ENCODE measurements at regions of chr2 and their contacts with region 1.

Region 1: DNA sequence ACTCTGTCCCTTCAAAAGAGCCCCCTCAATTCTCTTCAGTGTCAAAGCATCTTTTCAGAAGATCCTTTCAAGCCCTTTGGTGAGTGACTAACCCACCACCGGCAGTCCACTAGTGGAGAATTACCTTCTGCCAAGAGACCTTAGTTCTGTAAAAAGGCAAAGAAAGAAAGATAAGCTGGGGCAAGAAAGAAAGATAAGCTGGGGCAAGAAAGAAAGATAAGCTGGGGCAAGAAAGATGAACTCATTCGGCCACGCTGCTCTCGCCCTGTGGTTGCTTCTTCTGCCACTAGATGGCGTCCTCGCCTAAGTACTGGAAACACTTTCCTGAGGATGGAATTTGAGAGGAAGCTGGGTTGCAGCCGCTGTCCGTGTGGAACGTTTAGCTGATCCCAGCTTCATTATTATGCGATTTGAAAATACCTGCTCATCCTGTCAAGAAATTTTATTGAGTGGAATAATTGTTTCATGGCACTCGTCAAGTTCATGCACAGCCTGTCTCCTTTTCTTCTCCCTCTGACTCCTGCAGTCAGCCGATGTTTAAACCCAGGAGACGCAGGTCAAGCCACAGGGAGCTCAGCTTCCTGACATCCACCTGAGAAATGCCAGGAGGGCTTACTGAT is 17.3 kb upstream of the ANXA4 start:
- DNase-seq: peak; percentile 86 to 92 (median 89)
- H3K4me3 ChIP-seq: peak overlapping the region; percentile 54 to 58 (median 54)
- H3K27ac ChIP-seq: no peak overlapping the region
- H3K4me1 ChIP-seq: no peaks in the 10 kb centered on the region
- H3K27me3 ChIP-seq: no peaks in the 10 kb centered on the region
- CTCF ChIP-seq: peak; percentile 92

Region 2: GRCh38 chr2:69816923-69817542 is 92.4 kb after region 1 on chr2:
- intact Hi-C with region 1: loop called (anchors 10 kb)
- DNase-seq: peak in 4 of 5 donors; percentile 81 to 93 (median 86)
- H3K4me3 ChIP-seq: no peak overlapping the region
- H3K27ac ChIP-seq: no peak overlapping the region
- H3K4me1 ChIP-seq: no peaks in the 10 kb centered on the region
- H3K27me3 ChIP-seq: no peaks in the 10 kb centered on the region
- CTCF ChIP-seq: peak; percentile 96

Region 3: GRCh38 chr2:69914170-69914960 is 189.7 kb after region 1 on chr2:
- intact Hi-C with region 1: no loop called
- DNase-seq: peak; percentile 100
- H3K4me3 ChIP-seq: peak overlapping the region; percentile 47 to 71 (median 47)
- H3K27ac ChIP-seq: peak overlapping the region; percentile 98 to 99
- H3K4me1 ChIP-seq: peaks cover 0 to 2% (median 0%) of the 10 kb centered on the region in 3 donors
- H3K27me3 ChIP-seq: no peaks in the 10 kb centered on the region
- CTCF ChIP-seq: peak; percentile 19